ENCODE measurements at regions of chr4 and their contacts with region 1.

Region 1: GRCh38 chr4:42048407-42048806 is 58.1 kb downstream of the SLC30A9 start:
- DNase-seq: peak; percentile 79
- ATAC-seq: peak; percentile 99
- H3K4me3 ChIP-seq: no peak overlapping the region
- H3K27ac ChIP-seq: no peak overlapping the region
- H3K4me1 ChIP-seq: peaks cover 6% of the 10 kb centered on the region
- H3K27me3 ChIP-seq: no peaks in the 10 kb centered on the region
- CTCF ChIP-seq: no peak

Region 2: GRCh38 chr4:41990365-41991111 is 57.9 kb before region 1 on chr4 and contains the start of gene SLC30A9:
- CTCF ChIA-PET with region 1: no interaction called
- POLR2A ChIA-PET with region 1: no interaction called
- intact Hi-C with region 1: loop called (anchors 5 kb)
- DNase-seq: peak; percentile 91
- ATAC-seq: peak; percentile 83
- H3K4me3 ChIP-seq: peak within 1 kb of the TSS; percentile 98
- H3K27ac ChIP-seq: peak within 1 kb of the TSS; percentile 32
- H3K4me1 ChIP-seq: peaks cover 15% of the 10 kb centered on the region
- H3K27me3 ChIP-seq: no peaks in the 10 kb centered on the region
- CTCF ChIP-seq: no peak; the same call in 1 of the 2 replicates
- total RNA-seq, gene SLC30A9: 32.4 and 32.7 TPM in 2 replicates

Measured in PC-3 (cell line).